ENCODE measurements at regions of chr11 and their contacts with region 1.

Region 1: DNA sequence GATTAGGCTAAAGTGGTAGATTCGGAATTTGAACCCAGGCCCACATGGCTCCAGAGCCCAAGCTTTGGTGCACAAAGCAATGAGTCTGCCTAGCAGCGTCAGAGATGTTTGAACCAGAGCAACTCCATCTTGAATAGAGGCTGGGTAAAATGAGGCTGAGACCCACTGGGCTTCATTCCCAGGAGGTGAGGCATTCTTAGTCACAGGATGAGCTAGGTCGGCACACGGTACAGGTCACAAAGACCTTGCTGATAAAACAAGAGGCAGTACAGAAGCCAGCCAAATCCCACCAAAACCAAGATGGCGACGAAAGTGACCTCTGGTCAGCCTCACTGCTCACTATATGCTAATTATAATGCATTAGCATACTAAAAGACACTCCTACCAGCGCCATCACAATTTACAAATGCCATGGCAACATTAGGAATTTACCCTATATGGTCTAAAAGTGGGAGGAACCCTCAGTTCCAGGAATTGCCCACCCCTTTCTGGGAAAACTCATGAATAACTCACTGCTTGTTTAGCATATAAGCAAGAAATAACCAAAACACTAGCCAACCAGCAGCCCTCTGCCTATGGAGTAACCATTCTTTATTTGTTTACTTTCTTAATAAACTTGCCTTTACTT is 40.3 kb upstream of the DAGLA start:
- DNase-seq: no peak
- H3K4me3 Mint-ChIP-seq: no peak overlapping the region
- H3K27ac Mint-ChIP-seq: no peak overlapping the region
- H3K4me1 Mint-ChIP-seq: no peaks in the 10 kb centered on the region
- H3K27me3 Mint-ChIP-seq: peaks cover 3% of the 10 kb centered on the region

Region 2: GRCh38 chr11:61477727-61478148 is 162.2 kb before region 1 on chr11:
- CTCF ChIA-PET with region 1: interaction called, 17 read pairs
- POLR2A ChIA-PET with region 1: no interaction called
- intact Hi-C with region 1: no loop called
- DNase-seq: peak; percentile 59
- H3K4me3 Mint-ChIP-seq: no peak overlapping the region
- H3K27ac Mint-ChIP-seq: no peak overlapping the region
- H3K4me1 Mint-ChIP-seq: peaks cover 9% of the 10 kb centered on the region
- H3K27me3 Mint-ChIP-seq: peaks cover 1% of the 10 kb centered on the region

Region 3: GRCh38 chr11:61532139-61533038 is 107.5 kb before region 1 on chr11:
- CTCF ChIA-PET with region 1: interaction called, 10 read pairs
- POLR2A ChIA-PET with region 1: no interaction called
- intact Hi-C with region 1: no loop called
- DNase-seq: peak; percentile 57
- H3K4me3 Mint-ChIP-seq: no peak overlapping the region
- H3K27ac Mint-ChIP-seq: no peak overlapping the region
- H3K4me1 Mint-ChIP-seq: no peaks in the 10 kb centered on the region
- H3K27me3 Mint-ChIP-seq: peaks cover 15% of the 10 kb centered on the region

Region 4: GRCh38 chr11:61627567-61628445 is 12.1 kb before region 1 on chr11:
- CTCF ChIA-PET with region 1: interaction called, 37 read pairs
- POLR2A ChIA-PET with region 1: no interaction called
- intact Hi-C with region 1: no loop called
- DNase-seq: peak; percentile 57
- H3K4me3 Mint-ChIP-seq: no peak overlapping the region
- H3K27ac Mint-ChIP-seq: no peak overlapping the region
- H3K4me1 Mint-ChIP-seq: no peaks in the 10 kb centered on the region
- H3K27me3 Mint-ChIP-seq: peaks cover 15% of the 10 kb centered on the region

Region 5: GRCh38 chr11:61659414-61660209 is 19.7 kb after region 1 on chr11:
- CTCF ChIA-PET with region 1: no interaction called
- POLR2A ChIA-PET with region 1: no interaction called
- intact Hi-C with region 1: no loop called
- DNase-seq: no peak
- H3K4me3 Mint-ChIP-seq: no peak overlapping the region
- H3K27ac Mint-ChIP-seq: no peak overlapping the region
- H3K4me1 Mint-ChIP-seq: no peaks in the 10 kb centered on the region
- H3K27me3 Mint-ChIP-seq: peaks cover 2% of the 10 kb centered on the region

Region 6: DNA sequence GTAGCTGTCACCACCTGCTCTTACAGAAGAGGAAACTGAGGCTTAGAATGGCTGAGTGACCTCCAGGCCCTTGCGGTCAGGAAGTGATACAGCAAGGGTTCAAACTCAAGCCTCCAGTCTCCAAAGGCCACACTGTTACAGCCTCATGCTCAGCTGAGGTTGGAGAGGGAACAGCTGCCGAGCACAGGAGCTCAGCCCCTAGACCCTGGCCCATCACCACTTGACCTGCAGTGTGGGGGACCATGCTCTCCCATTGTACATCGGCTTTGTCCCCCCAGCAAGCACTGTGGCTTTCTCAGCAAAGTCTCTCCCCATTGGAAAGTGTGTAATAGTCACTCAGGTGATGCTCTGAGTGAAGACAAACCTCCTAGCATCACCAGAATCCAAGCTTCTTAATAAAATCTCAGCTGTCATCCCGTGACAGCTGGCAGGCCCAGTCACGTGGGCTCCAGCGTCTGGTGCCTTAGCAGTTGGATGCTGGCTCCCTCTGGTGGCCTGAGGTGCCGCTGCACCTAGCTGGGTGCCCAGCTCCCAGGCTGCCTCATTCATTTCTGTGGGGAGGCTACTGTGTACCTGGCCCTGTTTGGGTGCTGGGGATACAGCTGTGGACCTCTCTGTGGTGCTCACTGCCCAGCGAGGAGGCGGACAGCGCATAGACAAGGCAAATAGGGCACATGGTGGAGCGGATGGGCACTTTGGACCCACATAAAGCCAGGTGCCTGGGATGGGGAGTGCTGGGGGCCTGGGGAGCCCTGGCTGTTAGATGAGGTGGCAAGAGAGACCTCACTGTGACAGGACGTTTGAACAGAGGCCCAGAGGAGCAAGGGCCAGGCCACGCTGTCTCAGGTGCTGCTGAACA is 93.4 kb after region 1 on chr11:
- CTCF ChIA-PET with region 1: interaction called, 11 read pairs
- POLR2A ChIA-PET with region 1: no interaction called
- intact Hi-C with region 1: no loop called
- DNase-seq: peak; percentile 90
- H3K4me3 Mint-ChIP-seq: no peak overlapping the region
- H3K27ac Mint-ChIP-seq: no peak overlapping the region
- H3K4me1 Mint-ChIP-seq: peaks cover 2% of the 10 kb centered on the region
- H3K27me3 Mint-ChIP-seq: no peaks in the 10 kb centered on the region